PC-3 (cell line): ENCODE measurements at regions of chr3 and their contacts with region 1.

Region 1: DNA sequence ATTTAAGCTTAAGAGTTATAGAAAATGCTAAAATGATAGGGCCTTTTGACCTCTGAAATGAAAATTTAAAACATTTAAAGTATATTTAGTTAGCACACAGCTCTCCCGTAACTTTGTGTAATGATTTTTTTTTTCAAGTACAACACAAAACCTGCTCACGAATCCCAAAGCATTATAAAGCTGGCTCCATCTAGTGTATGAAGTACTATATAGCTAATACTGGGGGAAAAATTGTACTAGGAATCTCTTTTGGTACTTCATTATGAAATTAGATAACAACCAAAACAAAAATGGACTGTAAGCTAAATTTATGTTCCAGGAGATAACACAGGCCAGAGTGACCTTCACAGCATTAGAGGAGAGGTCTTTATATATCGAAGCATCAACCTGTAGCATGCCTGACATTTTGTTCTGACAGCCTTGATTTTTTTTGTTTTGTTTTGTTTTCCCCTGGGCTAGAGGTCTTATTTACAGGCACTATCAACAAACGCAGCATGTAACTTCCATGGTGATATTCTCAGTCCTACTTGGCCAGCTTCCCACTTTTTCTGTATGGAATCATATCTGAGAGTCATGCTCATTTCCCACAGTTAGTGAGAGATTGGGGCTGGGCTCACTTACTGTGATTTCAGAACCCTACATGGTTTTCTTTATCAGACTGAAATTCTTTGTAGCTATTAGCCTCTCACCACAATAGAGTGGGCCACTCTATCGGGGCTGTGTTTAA is 116.3 kb downstream of the MITF start:
- DNase-seq: peak; percentile 31
- ATAC-seq: peak; percentile 43
- H3K4me3 ChIP-seq: no peak overlapping the region
- H3K27ac ChIP-seq: no peak overlapping the region; the same call in 1 of the 2 replicates
- H3K4me1 ChIP-seq: peaks cover 21% of the 10 kb centered on the region
- H3K27me3 ChIP-seq: no peaks in the 10 kb centered on the region
- CTCF ChIP-seq: peak; percentile 56

Region 2: DNA sequence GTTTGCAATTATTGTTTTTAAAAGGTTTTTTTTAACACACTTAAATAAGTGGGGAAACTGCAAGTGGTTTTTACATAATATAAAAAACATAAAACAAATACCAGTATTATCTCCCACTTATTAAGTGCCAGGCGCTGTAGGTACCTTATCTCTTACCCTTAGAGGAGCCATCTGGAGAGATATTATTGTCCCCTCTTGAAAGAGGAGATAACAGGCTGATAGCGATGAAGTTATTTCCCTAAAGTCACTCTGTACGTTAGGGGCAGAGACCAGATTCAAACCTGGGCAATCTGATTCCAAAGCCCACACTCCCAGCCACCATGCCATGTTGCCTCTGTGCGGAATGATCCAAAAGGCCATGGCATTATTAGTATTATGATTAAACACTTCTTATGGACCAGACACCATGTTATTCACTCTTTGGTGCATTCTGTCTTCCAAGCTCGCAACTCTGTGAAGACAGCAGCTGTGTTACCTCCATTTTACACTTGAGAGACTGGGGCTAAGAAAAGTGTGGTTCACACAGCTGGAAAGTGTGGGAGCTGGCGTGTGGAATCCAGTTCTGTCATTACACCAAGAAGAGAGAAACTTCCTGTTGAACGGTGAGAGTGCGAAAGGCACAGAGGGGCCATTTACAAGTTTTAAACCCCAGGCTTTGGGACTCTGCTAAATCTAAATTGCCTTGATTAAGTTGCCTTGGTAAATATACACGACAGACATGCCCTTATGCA is 196.3 kb before region 1 on chr3:
- CTCF ChIA-PET with region 1: no interaction called
- POLR2A ChIA-PET with region 1: no interaction called
- intact Hi-C with region 1: no loop called
- DNase-seq: no peak
- ATAC-seq: no peak
- H3K4me3 ChIP-seq: no peak overlapping the region
- H3K27ac ChIP-seq: no peak overlapping the region
- H3K4me1 ChIP-seq: no peaks in the 10 kb centered on the region
- H3K27me3 ChIP-seq: no peaks in the 10 kb centered on the region
- CTCF ChIP-seq: no peak

Region 3: DNA sequence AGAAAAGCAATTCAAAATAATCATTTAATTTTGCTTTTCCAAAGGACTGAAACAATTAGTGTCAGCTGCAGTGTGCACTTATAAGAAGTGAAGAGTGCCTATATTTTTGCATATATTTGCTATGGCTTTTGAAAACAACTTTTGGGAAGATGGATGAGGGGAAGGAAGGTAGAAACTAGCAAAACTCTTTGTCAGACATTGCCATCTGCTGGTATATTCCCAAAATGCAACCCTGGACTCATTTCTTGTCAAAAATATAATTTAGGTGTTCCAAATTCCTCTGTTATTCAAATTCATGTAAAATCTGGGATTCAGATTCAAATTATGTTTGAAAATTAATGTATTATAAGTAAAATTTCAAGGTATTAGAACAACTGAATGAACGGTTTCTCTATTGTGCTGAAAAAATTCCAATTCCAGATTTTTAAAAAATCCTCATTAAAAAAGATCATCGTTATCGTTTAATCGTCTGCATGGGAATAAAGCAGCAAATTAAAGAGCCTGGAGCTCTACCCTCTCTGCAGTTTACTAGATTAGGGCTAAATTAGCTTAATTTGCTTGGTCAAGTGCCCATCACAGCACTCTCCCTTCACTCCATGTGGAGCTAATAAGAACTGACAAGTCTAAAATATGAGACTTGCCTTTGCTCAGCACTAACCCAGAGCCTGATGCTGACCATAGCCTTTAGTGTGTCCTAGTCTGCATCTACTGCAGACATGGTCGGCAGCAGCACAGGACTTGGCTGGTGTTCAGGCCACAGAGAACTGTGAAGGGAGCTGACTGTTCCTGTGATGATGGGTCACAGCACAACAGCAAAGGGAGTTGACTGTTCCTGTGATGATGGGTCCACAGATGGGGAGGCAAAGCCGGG is 184.3 kb before region 1 on chr3:
- CTCF ChIA-PET with region 1: no interaction called
- POLR2A ChIA-PET with region 1: no interaction called
- intact Hi-C with region 1: loop called (anchors 5 kb)
- DNase-seq: peak; percentile 64
- ATAC-seq: peak; percentile 33; the same call in 1 of the 2 replicates
- H3K4me3 ChIP-seq: no peak overlapping the region
- H3K27ac ChIP-seq: no peak overlapping the region
- H3K4me1 ChIP-seq: peaks cover 5% of the 10 kb centered on the region; the same call in 1 of the 2 replicates
- H3K27me3 ChIP-seq: no peaks in the 10 kb centered on the region
- CTCF ChIP-seq: peak; percentile 64

Region 4: GRCh38 chr3:69770219-69770618 is 85.4 kb before region 1 on chr3:
- CTCF ChIA-PET with region 1: interaction called, 11 read pairs
- POLR2A ChIA-PET with region 1: no interaction called
- intact Hi-C with region 1: loop called (anchors 5 kb)
- DNase-seq: peak; percentile 85
- ATAC-seq: peak; percentile 76
- H3K4me3 ChIP-seq: peak overlapping the region; percentile 48
- H3K27ac ChIP-seq: peak overlapping the region; percentile 87
- H3K4me1 ChIP-seq: peaks cover 55% of the 10 kb centered on the region
- H3K27me3 ChIP-seq: no peaks in the 10 kb centered on the region
- CTCF ChIP-seq: no peak

Region 5: GRCh38 chr3:69806735-69807438 is 48.7 kb before region 1 on chr3:
- CTCF ChIA-PET with region 1: no interaction called
- POLR2A ChIA-PET with region 1: no interaction called
- intact Hi-C with region 1: loop called (anchors 2 kb)
- DNase-seq: peak; percentile 71
- ATAC-seq: peak; percentile 81
- H3K4me3 ChIP-seq: no peak overlapping the region
- H3K27ac ChIP-seq: peak overlapping the region; percentile 78
- H3K4me1 ChIP-seq: peaks cover 15% of the 10 kb centered on the region
- H3K27me3 ChIP-seq: no peaks in the 10 kb centered on the region
- CTCF ChIP-seq: no peak

Region 6: GRCh38 chr3:69948246-69948862 is 92.8 kb after region 1 on chr3:
- CTCF ChIA-PET with region 1: no interaction called
- POLR2A ChIA-PET with region 1: no interaction called
- intact Hi-C with region 1: loop called (anchors 2 kb)
- DNase-seq: peak; percentile 35
- ATAC-seq: no peak
- H3K4me3 ChIP-seq: no peak overlapping the region
- H3K27ac ChIP-seq: no peak overlapping the region
- H3K4me1 ChIP-seq: no peaks in the 10 kb centered on the region
- H3K27me3 ChIP-seq: no peaks in the 10 kb centered on the region
- CTCF ChIP-seq: peak; percentile 51; the same call in 1 of the 2 replicates